ENCODE measurements at regions of chr13 and their contacts with region 1.

Region 1: DNA sequence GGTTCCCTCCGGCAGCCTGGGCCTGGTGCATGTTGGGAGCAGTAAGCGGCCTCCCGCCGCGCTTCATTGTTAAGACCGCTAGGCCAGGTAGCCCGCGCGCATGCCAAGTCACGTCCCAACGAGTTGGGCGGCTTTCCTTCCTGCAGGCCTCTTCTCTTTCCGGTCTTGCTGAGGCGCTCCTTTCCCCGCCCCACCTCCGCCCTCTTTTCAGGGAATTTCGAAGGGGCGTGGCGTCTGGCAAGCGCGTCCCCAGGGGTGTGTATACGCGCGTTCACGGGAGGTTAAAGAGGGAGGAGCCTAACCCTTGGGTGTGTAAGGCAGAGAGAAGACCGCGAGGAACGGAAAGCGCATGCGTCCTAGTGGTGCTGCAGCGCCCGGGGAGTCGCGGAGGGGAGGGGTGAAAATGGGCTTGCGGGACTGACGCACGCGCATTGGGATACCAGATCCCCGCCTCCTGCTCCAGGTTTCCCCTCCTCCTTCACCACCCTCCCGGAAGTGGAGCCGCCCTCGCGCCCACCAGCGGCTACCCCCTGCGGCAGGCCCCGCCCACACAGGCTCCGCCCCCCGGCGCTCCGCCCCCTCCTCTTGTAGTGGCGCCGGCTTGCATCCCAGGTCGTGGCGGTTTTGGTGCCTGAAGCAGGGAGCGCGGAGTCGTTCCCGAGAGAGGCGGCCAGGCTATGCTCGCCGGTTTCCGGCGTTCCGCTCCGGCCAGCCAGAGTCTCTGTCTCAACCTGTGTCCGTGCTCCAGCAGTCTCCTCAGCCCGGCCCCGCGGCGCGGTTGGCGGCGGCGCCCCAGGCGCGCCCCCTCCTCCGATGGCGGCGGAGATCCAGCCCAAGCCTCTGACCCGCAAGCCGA is at the start of gene WDFY2:
- DNase-seq: peak; percentile 99
- ATAC-seq: peak; percentile 92
- H3K4me3 ChIP-seq: peak within 1 kb of the TSS; percentile 82 to 98 (median 90)
- H3K27ac ChIP-seq: peak within 1 kb of the TSS; percentile 94
- H3K4me1 ChIP-seq: peaks cover 65% of the 10 kb centered on the region
- H3K27me3 ChIP-seq: no peaks in the 10 kb centered on the region; a peak in 1 of 5 replicates
- CTCF ChIP-seq: peak; percentile 64
- EP300 ChIP-seq: 0 out of 4 replicates have a peak, but pooled peaks of 1 of the 2 experiments have one; percentile 9
- POLR2A ChIP-seq: peak; percentile 65 to 89; a peak in 3 of 4 replicates
- RAD21 ChIP-seq: peak; percentile 46; the same call in 1 of the 2 replicates
- total RNA-seq, gene WDFY2: 16.4 and 22.6 TPM in 2 replicates

Region 2: GRCh38 chr13:49996951-49997895 is 1586.9 kb before region 1 on chr13 and contains the start of gene TRIM13:
- CTCF ChIA-PET with region 1: no interaction called
- POLR2A ChIA-PET with region 1: no interaction called
- in situ Hi-C with region 1: no loop called
- intact Hi-C with region 1: no loop called
- DNase-seq: peak; percentile 79
- ATAC-seq: peak; percentile 91
- H3K4me3 ChIP-seq: peak within 1 kb of the TSS; percentile 88 to 98 (median 95)
- H3K27ac ChIP-seq: peak within 1 kb of the TSS; percentile 94
- H3K4me1 ChIP-seq: peaks cover 30% of the 10 kb centered on the region
- H3K27me3 ChIP-seq: no peaks in the 10 kb centered on the region; a peak in 1 of 5 replicates
- CTCF ChIP-seq: peak; percentile 85
- EP300 ChIP-seq: no peak
- POLR2A ChIP-seq: peak; percentile 82 to 84
- RAD21 ChIP-seq: peak; percentile 68
- total RNA-seq, gene TRIM13: 18.8 and 22.0 TPM in 2 replicates

Region 3: GRCh38 chr13:51444922-51445321 is 139.2 kb before region 1 on chr13:
- CTCF ChIA-PET with region 1: no interaction called
- POLR2A ChIA-PET with region 1: interaction called, 3 read pairs
- in situ Hi-C with region 1: loop called (anchors 10 kb)
- intact Hi-C with region 1: no loop called
- DNase-seq: no peak
- ATAC-seq: no peak
- H3K4me3 ChIP-seq: no peak overlapping the region
- H3K27ac ChIP-seq: no peak overlapping the region
- H3K4me1 ChIP-seq: peaks cover 12% of the 10 kb centered on the region
- H3K27me3 ChIP-seq: no peaks in the 10 kb centered on the region
- CTCF ChIP-seq: peak; percentile 38
- EP300 ChIP-seq: no peak
- POLR2A ChIP-seq: no peak
- RAD21 ChIP-seq: no peak

Region 4: DNA sequence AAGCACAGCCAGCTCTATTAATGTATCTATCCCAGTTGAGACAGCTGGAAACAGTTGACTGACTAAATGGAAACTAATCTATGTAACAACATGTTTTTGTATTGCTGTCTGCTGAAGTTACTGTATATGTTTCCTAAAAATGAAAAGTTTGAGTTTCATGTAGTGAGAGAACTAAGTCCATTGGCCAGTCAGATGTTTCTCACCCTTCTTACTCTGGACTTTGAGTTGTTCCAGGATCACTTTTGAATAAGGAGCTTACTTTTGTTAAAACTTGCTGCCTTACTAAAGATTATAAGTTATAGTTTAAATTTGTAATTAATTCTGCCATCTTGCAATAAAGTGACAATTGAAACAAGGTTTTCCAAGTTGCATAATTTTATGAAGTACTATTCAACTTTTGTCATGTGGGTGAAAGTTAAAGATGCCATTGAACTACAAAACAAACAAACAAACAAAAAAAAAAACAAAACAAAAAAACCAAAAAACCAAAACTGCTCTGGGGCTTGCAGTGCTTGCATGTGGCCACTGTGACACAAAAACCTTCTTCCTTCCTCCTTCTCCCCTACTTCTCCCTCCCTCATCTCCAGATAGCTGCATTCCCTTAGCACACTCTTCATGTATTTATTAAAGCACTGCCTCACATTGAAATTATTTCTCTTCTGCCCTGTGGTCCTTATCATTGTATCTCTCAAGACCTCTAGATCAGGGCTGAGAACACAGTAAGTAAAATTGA is 15.5 kb after region 1 on chr13:
- CTCF ChIA-PET with region 1: no interaction called
- POLR2A ChIA-PET with region 1: no interaction called
- in situ Hi-C with region 1: no loop called
- intact Hi-C with region 1: no loop called
- DNase-seq: no peak
- ATAC-seq: no peak
- H3K4me3 ChIP-seq: no peak overlapping the region
- H3K27ac ChIP-seq: peak overlapping the region; percentile 18
- H3K4me1 ChIP-seq: peaks cover 78% of the 10 kb centered on the region
- H3K27me3 ChIP-seq: no peaks in the 10 kb centered on the region
- CTCF ChIP-seq: no peak
- EP300 ChIP-seq: no peak
- POLR2A ChIP-seq: no peak
- RAD21 ChIP-seq: no peak

Region 5: DNA sequence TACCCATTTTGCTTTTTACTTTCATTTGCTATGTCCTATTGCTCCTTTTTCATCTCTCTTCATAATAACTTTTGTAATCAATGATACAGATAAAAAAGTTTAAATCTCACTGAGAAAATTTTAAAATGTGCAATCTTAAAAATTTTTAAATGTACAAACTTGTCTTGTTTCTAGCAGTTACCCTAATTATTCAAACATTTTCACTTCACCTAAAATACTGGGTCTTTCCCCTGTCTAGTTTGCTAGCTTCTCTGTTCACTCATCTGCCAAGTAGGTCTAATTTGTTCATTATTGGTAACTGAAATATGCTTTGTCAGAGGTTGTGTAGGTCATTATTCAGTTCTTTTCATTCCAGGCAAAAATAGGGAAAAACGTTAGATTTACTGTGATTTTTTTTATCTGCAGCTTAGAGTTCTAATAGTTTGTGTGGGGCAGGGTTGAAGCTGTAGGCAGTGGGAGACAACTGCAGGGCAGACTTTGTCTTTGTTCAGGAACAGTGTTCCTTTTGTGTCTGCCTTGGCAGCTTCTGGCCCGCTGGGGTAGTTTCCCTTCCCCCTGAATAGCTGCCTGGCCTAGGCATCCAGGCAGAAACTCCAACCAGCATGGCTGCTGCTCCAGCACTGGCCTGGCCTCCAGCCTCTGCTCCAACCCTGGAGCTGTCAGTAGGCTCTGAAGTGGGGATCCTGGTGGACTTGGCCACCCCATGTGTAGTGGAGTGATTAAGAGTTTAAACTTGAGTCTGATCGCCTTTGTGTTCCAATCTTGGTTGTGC is 48.7 kb after region 1 on chr13:
- CTCF ChIA-PET with region 1: no interaction called
- POLR2A ChIA-PET with region 1: interaction called, 7 read pairs
- in situ Hi-C with region 1: no loop called
- intact Hi-C with region 1: loop called (anchors 1 kb)
- DNase-seq: peak; percentile 77
- ATAC-seq: peak; percentile 72
- H3K4me3 ChIP-seq: peak overlapping the region in 1 of 3 experiments; percentile 34; a peak in 2 of 6 replicates
- H3K27ac ChIP-seq: peak overlapping the region; percentile 62
- H3K4me1 ChIP-seq: peaks cover 72% of the 10 kb centered on the region
- H3K27me3 ChIP-seq: no peaks in the 10 kb centered on the region
- CTCF ChIP-seq: no peak
- EP300 ChIP-seq: no peak
- POLR2A ChIP-seq: no peak
- RAD21 ChIP-seq: 0 out of 2 replicates have a peak, but pooled peaks have one; percentile 39

Region 6: GRCh38 chr13:51764184-51765141 is 180.4 kb after region 1 on chr13:
- CTCF ChIA-PET with region 1: no interaction called
- POLR2A ChIA-PET with region 1: interaction called, 5 read pairs
- in situ Hi-C with region 1: no loop called
- intact Hi-C with region 1: loop called (anchors 5 kb)
- DNase-seq: peak; percentile 92
- ATAC-seq: peak; percentile 92
- H3K4me3 ChIP-seq: peak overlapping the region in 1 of 3 experiments; percentile 26; a peak in 2 of 6 replicates
- H3K27ac ChIP-seq: peak overlapping the region; percentile 63
- H3K4me1 ChIP-seq: peaks cover 26% of the 10 kb centered on the region
- H3K27me3 ChIP-seq: no peaks in the 10 kb centered on the region
- CTCF ChIP-seq: no peak
- EP300 ChIP-seq: peak in 1 of 2 experiments; percentile 58; a peak in 2 of 4 replicates
- POLR2A ChIP-seq: peak in 1 of 2 experiments; percentile 40; a peak in 1 of 4 replicates
- RAD21 ChIP-seq: peak; percentile 50; the same call in 1 of the 2 replicates

Region 7: GRCh38 chr13:51797664-51798488 is 213.8 kb after region 1 on chr13:
- CTCF ChIA-PET with region 1: no interaction called
- POLR2A ChIA-PET with region 1: interaction called, 3 read pairs
- in situ Hi-C with region 1: no loop called
- intact Hi-C with region 1: loop called (anchors 5 kb)
- DNase-seq: peak; percentile 66
- ATAC-seq: peak; percentile 84
- H3K4me3 ChIP-seq: no peak overlapping the region
- H3K27ac ChIP-seq: no peak overlapping the region
- H3K4me1 ChIP-seq: peaks cover 33% of the 10 kb centered on the region
- H3K27me3 ChIP-seq: no peaks in the 10 kb centered on the region
- CTCF ChIP-seq: peak; percentile 84
- EP300 ChIP-seq: no peak
- POLR2A ChIP-seq: no peak
- RAD21 ChIP-seq: peak; percentile 82